Activated CD4-positive, alpha-beta T cell treated with anti-CD3 and anti-CD28 coated beads, Interleukin-2, amount 10 ng/mL, durations not matched to agents 24 days and 14 days (primary cell): ENCODE measurements at regions of chr12 and their contacts with region 1.

Region 1: DNA sequence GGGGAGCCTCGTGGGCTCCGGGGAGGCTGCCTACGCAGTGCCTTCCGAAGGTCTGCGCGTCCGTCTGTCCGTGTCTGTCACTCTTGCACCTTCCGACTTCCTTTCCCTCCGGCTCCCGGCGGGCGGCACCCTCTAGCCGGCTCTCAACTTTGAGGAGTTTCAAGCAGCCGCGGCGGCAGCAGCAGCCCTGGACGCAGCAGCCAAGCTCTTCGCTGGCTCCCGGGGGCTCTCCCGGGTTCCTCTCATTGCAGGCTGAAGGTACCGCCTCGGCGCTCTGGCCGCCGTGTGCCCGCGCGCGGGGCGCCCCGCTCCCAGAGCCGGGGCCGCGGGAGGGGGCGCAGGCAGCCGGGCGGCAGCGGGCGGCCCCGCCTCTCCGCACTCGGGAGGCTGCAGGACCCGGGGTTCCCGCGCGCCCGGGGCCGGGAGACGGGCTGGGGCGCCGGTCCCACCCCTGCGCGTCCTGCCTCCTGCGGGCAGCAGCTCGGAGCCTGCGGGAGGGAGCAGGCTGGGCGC is at the starts of genes AMIGO2 and PCED1B:
- DNase-seq: peak; percentile 90
- H3K4me3 Mint-ChIP-seq: peak within 1 kb of the TSS; percentile 98
- H3K27ac Mint-ChIP-seq: peak within 1 kb of the TSS; percentile 99
- H3K4me1 Mint-ChIP-seq: peaks cover 63% of the 10 kb centered on the region
- H3K27me3 Mint-ChIP-seq: no peaks in the 10 kb centered on the region
- total RNA-seq, gene AMIGO2: 13.6 and 14.4 TPM in 2 replicates
- total RNA-seq, gene PCED1B: 51.7 and 55.2 TPM in 2 replicates

Region 2: DNA sequence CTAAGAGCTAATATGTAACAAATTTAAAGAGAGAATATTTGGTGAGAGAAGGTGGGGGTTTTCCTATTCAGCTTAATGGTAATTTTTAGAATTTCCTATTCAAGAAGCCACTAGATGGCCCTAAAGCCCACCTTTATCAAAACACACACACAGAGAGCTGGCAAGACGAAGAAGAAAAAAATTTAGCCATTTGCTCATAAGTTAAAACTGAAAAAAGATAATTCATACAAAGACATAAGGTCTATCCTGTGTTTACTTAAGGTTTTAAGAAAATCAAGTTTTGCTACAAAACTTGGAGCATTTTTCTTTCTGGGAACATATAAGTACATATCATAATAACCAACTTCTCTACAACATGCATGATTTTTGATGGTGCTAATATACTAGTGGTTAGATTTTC is 46.9 kb before region 1 on chr12:
- intact Hi-C with region 1: loop called (anchors 2 kb)
- DNase-seq: peak; percentile 72
- H3K4me3 Mint-ChIP-seq: no peak overlapping the region
- H3K27ac Mint-ChIP-seq: no peak overlapping the region
- H3K4me1 Mint-ChIP-seq: peaks cover 13% of the 10 kb centered on the region
- H3K27me3 Mint-ChIP-seq: peaks cover 2% of the 10 kb centered on the region

Region 3: GRCh38 chr12:47147739-47148138 is 68.2 kb after region 1 on chr12:
- intact Hi-C with region 1: no loop called
- DNase-seq: no peak
- H3K4me3 Mint-ChIP-seq: no peak overlapping the region
- H3K27ac Mint-ChIP-seq: no peak overlapping the region
- H3K4me1 Mint-ChIP-seq: peaks cover 17% of the 10 kb centered on the region
- H3K27me3 Mint-ChIP-seq: no peaks in the 10 kb centered on the region

Region 4: GRCh38 chr12:47190271-47190750 is 110.8 kb after region 1 on chr12:
- intact Hi-C with region 1: loop called (anchors 2 kb)
- DNase-seq: no peak
- H3K4me3 Mint-ChIP-seq: peak overlapping the region; percentile 66
- H3K27ac Mint-ChIP-seq: peak overlapping the region; percentile 81
- H3K4me1 Mint-ChIP-seq: peaks cover 63% of the 10 kb centered on the region
- H3K27me3 Mint-ChIP-seq: no peaks in the 10 kb centered on the region

Region 5: DNA sequence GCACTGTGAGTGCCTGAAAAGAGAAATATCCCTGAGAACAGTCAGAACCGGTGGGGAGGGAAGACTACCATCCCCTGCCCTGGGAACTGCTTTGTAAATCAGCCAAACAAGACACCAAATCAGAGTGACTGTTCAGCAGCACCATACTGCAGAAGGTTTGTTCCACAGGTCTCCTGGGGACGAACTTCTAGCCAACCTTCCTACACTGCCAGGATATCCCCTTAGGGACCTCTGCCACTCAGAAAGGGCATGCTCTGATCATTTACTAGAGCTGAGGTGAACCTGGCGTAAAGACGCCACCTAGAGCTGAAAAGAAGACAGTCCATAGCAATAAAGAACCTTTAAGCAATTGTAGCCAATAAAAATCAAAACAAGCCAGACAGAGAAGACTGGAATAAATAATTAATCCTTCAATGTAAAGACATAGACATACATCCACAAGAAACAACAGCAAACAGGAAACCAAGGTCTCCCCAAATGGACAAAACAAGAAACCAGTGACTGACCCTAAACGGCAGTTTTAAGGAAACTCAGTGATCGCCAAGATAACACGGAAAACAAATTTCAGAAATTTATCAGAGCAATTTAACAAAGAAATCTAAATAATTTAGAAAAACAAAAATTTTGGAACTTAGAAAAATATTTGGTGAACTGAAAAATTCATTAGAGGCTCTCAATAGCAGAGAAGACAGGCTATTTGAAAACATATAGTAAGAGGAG is 228.3 kb after region 1 on chr12:
- intact Hi-C with region 1: loop called (anchors 2 kb)
- DNase-seq: peak; percentile 88
- H3K4me3 Mint-ChIP-seq: peak overlapping the region; percentile 88
- H3K27ac Mint-ChIP-seq: peak overlapping the region; percentile 88
- H3K4me1 Mint-ChIP-seq: peaks cover 51% of the 10 kb centered on the region
- H3K27me3 Mint-ChIP-seq: no peaks in the 10 kb centered on the region

Region 6: GRCh38 chr12:47397664-47398281 is 318.2 kb after region 1 on chr12:
- intact Hi-C with region 1: loop called (anchors 1 kb)
- DNase-seq: peak; percentile 84
- H3K4me3 Mint-ChIP-seq: peak overlapping the region; percentile 59
- H3K27ac Mint-ChIP-seq: peak overlapping the region; percentile 99
- H3K4me1 Mint-ChIP-seq: peaks cover 79% of the 10 kb centered on the region
- H3K27me3 Mint-ChIP-seq: no peaks in the 10 kb centered on the region